Activated CD4-positive, alpha-beta T cell treated with anti-CD3 and anti-CD28 coated beads, Interleukin-2, amount 10 ng/mL, durations not matched to agents 24 days and 14 days (primary cell): ENCODE measurements at regions of chr17 and their contacts with region 1.

Region 1: GRCh38 chr17:57987580-57988421 is at the start of gene VEZF1:
- DNase-seq: peak; percentile 93
- H3K4me3 Mint-ChIP-seq: peak within 1 kb of the TSS; percentile 94
- H3K27ac Mint-ChIP-seq: peak within 1 kb of the TSS; percentile 96
- H3K4me1 Mint-ChIP-seq: peaks cover 47% of the 10 kb centered on the region
- H3K27me3 Mint-ChIP-seq: no peaks in the 10 kb centered on the region
- total RNA-seq, gene VEZF1: 35.4 and 37.3 TPM in 2 replicates

Region 2: GRCh38 chr17:57849874-57850754 is 137.7 kb before region 1 on chr17 and contains the start of gene MRPS23:
- intact Hi-C with region 1: loop called (anchors 1 kb)
- DNase-seq: peak; percentile 99
- H3K4me3 Mint-ChIP-seq: peak within 1 kb of the TSS; percentile 97
- H3K27ac Mint-ChIP-seq: peak within 1 kb of the TSS; percentile 97
- H3K4me1 Mint-ChIP-seq: peaks cover 28% of the 10 kb centered on the region
- H3K27me3 Mint-ChIP-seq: no peaks in the 10 kb centered on the region
- total RNA-seq, gene MRPS23: 83.3 and 84.8 TPM in 2 replicates

Region 3: GRCh38 chr17:57956291-57957119 is 31.3 kb before region 1 on chr17:
- intact Hi-C with region 1: loop called (anchors 2 kb)
- DNase-seq: peak; percentile 85
- H3K4me3 Mint-ChIP-seq: peak overlapping the region; percentile 75
- H3K27ac Mint-ChIP-seq: no peak overlapping the region
- H3K4me1 Mint-ChIP-seq: peaks cover 17% of the 10 kb centered on the region
- H3K27me3 Mint-ChIP-seq: peaks cover 58% of the 10 kb centered on the region

Region 4: DNA sequence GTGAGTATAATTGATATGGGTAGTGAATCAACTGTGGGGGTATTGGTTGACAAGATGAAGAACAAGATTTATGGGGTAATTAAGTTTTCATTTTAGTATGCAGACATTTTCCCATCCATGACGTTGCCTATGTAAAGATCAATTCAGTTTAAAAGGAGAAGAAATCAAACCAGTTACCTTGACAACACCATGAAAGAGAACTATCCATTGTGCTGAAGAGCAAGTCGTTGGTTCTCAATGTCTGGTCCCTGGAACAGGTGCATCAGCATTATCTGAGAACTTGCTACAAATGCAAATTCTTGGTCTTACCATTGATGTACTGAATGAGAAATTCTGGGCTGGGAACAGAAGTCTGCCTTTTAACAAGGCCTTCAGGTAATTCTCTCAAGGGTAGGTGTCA is 178.2 kb after region 1 on chr17:
- intact Hi-C with region 1: no loop called
- DNase-seq: no peak
- H3K4me3 Mint-ChIP-seq: no peak overlapping the region
- H3K27ac Mint-ChIP-seq: no peak overlapping the region
- H3K4me1 Mint-ChIP-seq: peaks cover 15% of the 10 kb centered on the region
- H3K27me3 Mint-ChIP-seq: peaks cover 54% of the 10 kb centered on the region

Region 5: GRCh38 chr17:58200017-58200633 is 212.3 kb after region 1 on chr17:
- intact Hi-C with region 1: no loop called
- DNase-seq: peak; percentile 86
- H3K4me3 Mint-ChIP-seq: no peak overlapping the region
- H3K27ac Mint-ChIP-seq: no peak overlapping the region
- H3K4me1 Mint-ChIP-seq: peaks cover 2% of the 10 kb centered on the region
- H3K27me3 Mint-ChIP-seq: peaks cover 6% of the 10 kb centered on the region